Activated T-helper 1 cell treated with anti-CD3 and anti-CD28 coated beads, Interleukin-12 subunit alpha, Interleukin-12 subunit beta, Interleukin-2, Interleukin-4 antibody, amounts not matched to agents 30 ng/mL and 10 ng/mL and 1 ng/mL, durations not matched to agents 14 hours and 24 hours and 36 hours (primary cell): ENCODE measurements at regions of chr2 and their contacts with region 1.

Region 1: DNA sequence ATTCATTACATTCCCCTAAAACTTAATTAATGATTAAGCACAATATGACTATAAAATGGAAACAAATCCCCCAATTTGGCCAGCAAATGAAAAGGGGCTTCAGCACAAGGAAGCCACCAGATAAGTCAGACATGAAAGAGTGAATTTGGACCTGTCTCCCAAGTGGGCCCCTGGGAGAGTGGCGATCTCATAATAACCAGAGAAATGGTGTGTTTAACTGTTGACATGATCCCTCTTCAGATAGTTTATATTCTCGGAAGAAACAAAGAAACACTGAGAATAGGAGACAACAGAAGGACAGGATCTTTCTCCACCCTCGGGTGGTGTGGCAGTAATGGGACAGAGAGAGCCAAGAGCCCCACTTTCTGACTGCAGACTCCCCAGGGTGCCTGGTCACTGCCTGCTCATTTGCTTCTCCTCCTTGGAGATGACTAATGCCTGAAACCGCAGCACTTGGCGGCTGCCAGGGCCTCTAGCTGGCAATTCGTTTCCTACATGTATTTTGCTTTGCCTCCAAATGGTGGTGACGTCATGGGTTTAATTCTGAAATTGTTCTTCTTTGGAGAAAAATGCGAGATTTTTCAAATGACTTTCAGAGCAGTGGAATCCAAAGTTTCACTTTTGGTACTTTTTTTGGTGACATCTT is 46.4 kb upstream of the SPP2 start:
- DNase-seq: no peak
- H3K4me3 Mint-ChIP-seq: no peak overlapping the region
- H3K27ac Mint-ChIP-seq: no peak overlapping the region
- H3K4me1 Mint-ChIP-seq: peaks cover 13% of the 10 kb centered on the region
- H3K27me3 Mint-ChIP-seq: peaks cover 30% of the 10 kb centered on the region

Region 2: DNA sequence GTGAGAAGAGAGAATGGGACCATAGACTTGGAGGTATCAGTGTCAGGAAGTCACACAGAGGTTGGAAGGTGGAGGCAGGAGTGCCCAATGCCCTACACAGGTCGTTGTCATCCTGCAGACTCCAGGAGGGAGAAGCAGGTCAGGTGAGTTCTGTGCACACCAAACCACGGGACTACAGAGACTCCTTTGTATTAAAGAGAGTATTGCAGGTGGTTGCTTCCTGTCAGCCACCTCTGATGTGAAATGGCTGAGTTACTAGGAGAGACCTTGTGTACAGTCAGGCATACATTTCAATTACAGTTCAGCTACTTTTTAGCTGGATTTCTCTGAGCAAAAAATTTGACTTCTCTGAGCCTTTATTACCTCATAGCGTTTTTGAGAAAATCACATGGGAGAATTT is 98.0 kb after region 1 on chr2:
- intact Hi-C with region 1: loop called (anchors 5 kb)
- DNase-seq: no peak
- H3K4me3 Mint-ChIP-seq: no peak overlapping the region
- H3K27ac Mint-ChIP-seq: no peak overlapping the region
- H3K4me1 Mint-ChIP-seq: peaks cover 38% of the 10 kb centered on the region
- H3K27me3 Mint-ChIP-seq: peaks cover 21% of the 10 kb centered on the region

Region 3: GRCh38 chr2:234211797-234212196 is 207.7 kb after region 1 on chr2:
- intact Hi-C with region 1: no loop called
- DNase-seq: no peak
- H3K4me3 Mint-ChIP-seq: no peak overlapping the region
- H3K27ac Mint-ChIP-seq: no peak overlapping the region
- H3K4me1 Mint-ChIP-seq: peaks cover 4% of the 10 kb centered on the region
- H3K27me3 Mint-ChIP-seq: peaks cover 9% of the 10 kb centered on the region